CD8-positive, alpha-beta T cell (primary cell): ENCODE measurements at regions of chr7 and their contacts with region 1.

Region 1: GRCh38 chr7:132773527-132773956 is 197.3 kb upstream of the PLXNA4 start:
- DNase-seq: no peak
- ATAC-seq: no peak
- H3K4me3 ChIP-seq: no peak overlapping the region
- H3K4me3 Mint-ChIP-seq: no peak overlapping the region
- H3K27ac ChIP-seq: no peak overlapping the region
- H3K27ac Mint-ChIP-seq: no peak overlapping the region
- H3K4me1 ChIP-seq: peaks cover 22% of the 10 kb centered on the region
- H3K4me1 Mint-ChIP-seq: peaks cover 37% of the 10 kb centered on the region
- H3K27me3 ChIP-seq: no peaks in the 10 kb centered on the region
- H3K27me3 Mint-ChIP-seq: peaks cover 3% of the 10 kb centered on the region
- CTCF ChIP-seq: no peak

Region 2: DNA sequence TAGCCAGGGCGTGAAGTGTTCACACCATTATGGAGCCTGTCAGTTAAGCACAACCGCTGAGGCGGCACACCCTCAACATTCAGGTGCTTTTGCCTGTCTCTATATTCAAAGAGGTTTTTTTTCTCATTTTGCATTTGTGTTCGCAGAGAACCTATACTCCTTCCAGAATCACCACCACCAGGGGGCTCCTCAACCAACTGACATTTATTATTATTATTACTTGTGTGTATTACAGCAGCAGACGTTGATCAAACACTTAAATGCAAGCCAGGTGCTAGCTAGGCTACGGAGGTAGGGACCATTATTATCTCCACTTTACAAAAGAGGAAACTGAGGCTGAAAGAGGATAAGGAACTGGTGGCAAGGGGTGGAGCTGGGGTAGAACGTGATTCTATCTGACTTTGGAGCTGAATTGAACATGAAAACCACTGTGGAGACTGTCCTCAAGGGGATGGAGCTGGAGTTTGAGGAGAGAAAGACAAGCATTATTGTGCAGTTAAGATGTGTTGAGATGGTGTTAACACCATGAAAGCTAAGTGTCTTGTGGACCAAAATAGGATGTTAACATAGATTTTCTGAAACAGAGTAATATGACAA is 63.5 kb before region 1 on chr7:
- CTCF ChIA-PET with region 1: interaction called, 3 read pairs
- POLR2A ChIA-PET with region 1: no interaction called
- intact Hi-C with region 1: loop called in 1 of 2 experiments (anchors 1 kb)
- DNase-seq: peak in 4 of 9 experiments; percentile 15 to 50 (median 30)
- ATAC-seq: no peak
- H3K4me3 ChIP-seq: no peak overlapping the region
- H3K4me3 Mint-ChIP-seq: no peak overlapping the region
- H3K27ac ChIP-seq: no peak overlapping the region
- H3K27ac Mint-ChIP-seq: no peak overlapping the region
- H3K4me1 ChIP-seq: no peaks in the 10 kb centered on the region
- H3K4me1 Mint-ChIP-seq: peaks cover 2% of the 10 kb centered on the region
- H3K27me3 ChIP-seq: no peaks in the 10 kb centered on the region
- H3K27me3 Mint-ChIP-seq: no peaks in the 10 kb centered on the region
- CTCF ChIP-seq: peak; percentile 27

Region 3: GRCh38 chr7:133252858-133253518 is 479.4 kb after region 1 on chr7 and contains the start of gene EXOC4:
- CTCF ChIA-PET with region 1: no interaction called
- POLR2A ChIA-PET with region 1: no interaction called
- intact Hi-C with region 1: loop called in 1 of 2 experiments (anchors 5 kb)
- DNase-seq: peak; percentile 82 to 98 (median 89)
- ATAC-seq: peak; percentile 99
- H3K4me3 ChIP-seq: peak within 1 kb of the TSS; percentile 88
- H3K4me3 Mint-ChIP-seq: peak within 1 kb of the TSS; percentile 96
- H3K27ac ChIP-seq: peak within 1 kb of the TSS; percentile 83 to 92
- H3K27ac Mint-ChIP-seq: peak within 1 kb of the TSS; percentile 96
- H3K4me1 ChIP-seq: peaks cover 15% of the 10 kb centered on the region
- H3K4me1 Mint-ChIP-seq: peaks cover 44% of the 10 kb centered on the region
- H3K27me3 ChIP-seq: no peaks in the 10 kb centered on the region
- H3K27me3 Mint-ChIP-seq: no peaks in the 10 kb centered on the region
- CTCF ChIP-seq: no peak
- total RNA-seq, gene EXOC4: 47.9 to 50.5 TPM